PC-3 (cell line): ENCODE measurements at regions of chr4 and their contacts with region 1.

Region 1: GRCh38 chr4:140012688-140013486 is 141.1 kb downstream of the MAML3 start:
- DNase-seq: peak; percentile 93
- ATAC-seq: peak; percentile 99
- H3K4me3 ChIP-seq: 0 out of 2 replicates have a peak overlapping the region, but pooled peaks have one; percentile 13
- H3K27ac ChIP-seq: peak overlapping the region; percentile 82
- H3K4me1 ChIP-seq: peaks cover 22% of the 10 kb centered on the region
- H3K27me3 ChIP-seq: no peaks in the 10 kb centered on the region
- CTCF ChIP-seq: peak; percentile 83

Region 2: GRCh38 chr4:139015269-139015947 is 997.5 kb before region 1 on chr4 and contains the start of gene NOCT:
- CTCF ChIA-PET with region 1: no interaction called
- POLR2A ChIA-PET with region 1: no interaction called
- intact Hi-C with region 1: no loop called
- DNase-seq: peak; percentile 84
- ATAC-seq: peak; percentile 78
- H3K4me3 ChIP-seq: peak within 1 kb of the TSS; percentile 93
- H3K27ac ChIP-seq: peak within 1 kb of the TSS; percentile 98
- H3K4me1 ChIP-seq: peaks cover 42% of the 10 kb centered on the region
- H3K27me3 ChIP-seq: no peaks in the 10 kb centered on the region
- CTCF ChIP-seq: no peak
- total RNA-seq, gene NOCT: 25.8 and 32.7 TPM in 2 replicates

Region 3: GRCh38 chr4:140085062-140085622 is 72.3 kb after region 1 on chr4:
- CTCF ChIA-PET with region 1: no interaction called
- POLR2A ChIA-PET with region 1: no interaction called
- intact Hi-C with region 1: loop called (anchors 2 kb)
- DNase-seq: peak; percentile 80
- ATAC-seq: peak; percentile 89
- H3K4me3 ChIP-seq: peak overlapping the region; percentile 54
- H3K27ac ChIP-seq: peak overlapping the region; percentile 95
- H3K4me1 ChIP-seq: peaks cover 36% of the 10 kb centered on the region
- H3K27me3 ChIP-seq: no peaks in the 10 kb centered on the region
- CTCF ChIP-seq: no peak

Region 4: DNA sequence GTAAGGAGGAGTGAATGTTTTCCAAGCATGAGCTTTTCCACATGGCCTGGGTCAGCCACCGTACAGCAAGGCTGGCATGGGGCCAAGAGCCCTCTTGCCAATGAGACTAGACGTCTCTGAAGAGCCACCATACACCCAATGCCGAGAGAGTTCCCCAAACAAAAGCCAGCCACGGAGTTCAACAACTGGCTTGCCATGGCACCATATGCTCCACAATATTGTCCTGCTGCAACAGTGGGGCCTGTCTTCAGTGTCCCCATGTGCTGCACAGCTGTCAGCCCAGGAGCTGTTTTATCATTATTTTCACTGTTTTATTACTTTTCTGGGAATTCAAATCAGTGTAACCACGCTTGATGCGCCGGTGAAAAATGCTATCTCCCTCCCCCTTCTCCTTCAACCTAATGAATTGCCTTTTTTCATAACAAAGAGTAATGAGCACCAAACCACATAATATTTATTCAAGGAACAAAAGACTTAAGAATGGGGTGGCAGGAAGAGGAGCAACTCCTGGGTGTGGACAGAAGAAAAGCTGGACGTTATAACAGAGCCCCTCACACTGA is 122.7 kb after region 1 on chr4:
- CTCF ChIA-PET with region 1: no interaction called
- POLR2A ChIA-PET with region 1: no interaction called
- intact Hi-C with region 1: loop called (anchors 5 kb)
- DNase-seq: peak; percentile 17
- ATAC-seq: no peak
- H3K4me3 ChIP-seq: no peak overlapping the region
- H3K27ac ChIP-seq: peak overlapping the region; percentile 33
- H3K4me1 ChIP-seq: peaks cover 71% of the 10 kb centered on the region
- H3K27me3 ChIP-seq: no peaks in the 10 kb centered on the region
- CTCF ChIP-seq: no peak

Region 5: GRCh38 chr4:140326395-140326993 is 313.6 kb after region 1 on chr4:
- CTCF ChIA-PET with region 1: no interaction called
- POLR2A ChIA-PET with region 1: no interaction called
- intact Hi-C with region 1: loop called (anchors 1 kb)
- DNase-seq: peak; percentile 59
- ATAC-seq: peak; percentile 86
- H3K4me3 ChIP-seq: no peak overlapping the region
- H3K27ac ChIP-seq: no peak overlapping the region
- H3K4me1 ChIP-seq: no peaks in the 10 kb centered on the region
- H3K27me3 ChIP-seq: no peaks in the 10 kb centered on the region
- CTCF ChIP-seq: peak; percentile 82

Region 6: DNA sequence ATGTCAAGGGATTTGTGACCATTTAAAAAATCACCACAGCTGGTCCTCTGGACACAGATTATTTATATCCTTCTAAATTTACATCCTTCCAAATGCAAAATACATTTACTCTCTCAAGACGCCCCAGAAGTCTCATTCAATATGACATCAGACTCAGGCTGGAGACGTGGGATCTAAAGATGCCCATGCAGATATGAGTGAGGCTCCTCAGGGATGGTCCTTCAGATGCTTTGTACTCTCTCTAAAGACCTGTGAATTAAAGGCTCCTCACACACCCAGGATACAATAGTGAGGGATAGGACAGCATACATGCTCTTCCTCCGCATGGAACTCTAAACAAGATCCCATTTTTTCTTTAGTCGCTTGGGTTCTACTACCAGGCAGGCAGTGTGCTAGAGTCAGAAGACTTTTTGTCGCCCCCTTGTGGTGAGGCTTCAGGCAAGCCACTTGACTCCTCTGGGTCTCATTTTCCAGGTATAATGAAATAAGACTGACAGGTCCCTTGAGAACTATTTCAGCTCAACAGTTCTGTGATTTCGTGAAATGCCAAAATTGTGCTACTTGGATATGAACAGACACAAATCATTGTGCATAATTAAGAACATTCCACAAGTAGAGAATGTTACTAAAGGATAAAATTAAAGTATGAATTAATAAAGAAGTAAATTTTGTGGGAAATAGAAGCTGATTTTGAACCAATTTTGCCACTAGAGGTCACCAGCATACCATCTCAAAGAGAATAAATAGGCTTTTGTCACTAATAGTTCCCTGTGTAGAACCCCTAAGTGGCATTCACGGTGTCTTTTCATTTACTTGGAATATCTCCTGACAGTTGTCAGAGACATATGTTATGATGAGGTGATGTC is 346.9 kb after region 1 on chr4:
- CTCF ChIA-PET with region 1: no interaction called
- POLR2A ChIA-PET with region 1: no interaction called
- intact Hi-C with region 1: loop called (anchors 1 kb)
- DNase-seq: peak; percentile 86
- ATAC-seq: peak; percentile 95
- H3K4me3 ChIP-seq: no peak overlapping the region
- H3K27ac ChIP-seq: no peak overlapping the region
- H3K4me1 ChIP-seq: no peaks in the 10 kb centered on the region
- H3K27me3 ChIP-seq: no peaks in the 10 kb centered on the region
- CTCF ChIP-seq: peak; percentile 89